Natural killer cell (primary cell): ENCODE measurements at regions of chr13 and their contacts with region 1.

Region 1: DNA sequence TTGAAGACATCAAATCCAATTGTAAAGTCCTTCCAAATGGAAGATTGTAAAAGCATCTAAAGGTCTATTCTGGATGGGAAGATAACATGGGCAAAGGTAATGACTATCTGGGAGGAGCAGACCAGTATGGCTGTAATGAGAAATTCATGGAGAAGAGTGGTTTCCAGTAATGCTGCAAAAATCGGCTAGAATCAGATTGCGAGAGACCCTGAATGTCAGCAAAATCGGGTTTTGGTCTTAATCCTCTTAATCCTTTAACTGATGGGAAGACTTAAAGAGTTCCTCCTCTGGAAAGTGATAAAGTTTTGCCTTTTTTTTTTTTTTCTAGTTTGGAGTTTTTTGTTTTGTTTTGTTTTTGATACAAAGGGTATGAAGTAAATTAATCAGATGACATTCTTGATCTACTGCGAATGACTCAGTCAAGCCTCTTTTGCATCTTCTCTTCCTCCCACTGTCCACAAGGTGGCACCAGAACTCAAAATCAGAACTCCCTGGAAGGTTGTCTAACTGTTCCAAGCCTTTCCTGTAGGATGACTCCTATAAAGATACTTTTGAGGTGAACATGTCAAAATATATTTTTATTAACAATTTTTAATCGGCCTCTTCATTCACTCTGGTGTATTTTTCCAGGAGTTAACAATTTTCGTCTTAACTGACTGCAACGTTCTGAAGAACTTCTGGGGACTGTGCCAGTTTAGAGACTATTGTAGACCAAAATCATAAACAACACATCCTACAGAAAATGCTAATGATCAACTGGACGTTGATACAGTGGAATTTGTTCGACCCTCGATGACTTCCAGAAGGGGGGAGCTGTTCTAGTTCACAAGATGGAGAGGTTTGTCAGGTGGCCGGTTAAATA is 213.3 kb upstream of the MIR17HG start:
- DNase-seq: peak in 1 of 2 donors; percentile 58
- ATAC-seq: peak in 1 of 3 donors; percentile 44
- H3K4me3 ChIP-seq: no peak overlapping the region
- H3K4me3 Mint-ChIP-seq: no peak overlapping the region
- H3K27ac ChIP-seq: no peak overlapping the region
- H3K27ac Mint-ChIP-seq: no peak overlapping the region
- H3K4me1 ChIP-seq: no peaks in the 10 kb centered on the region
- H3K4me1 Mint-ChIP-seq: no peaks in the 10 kb centered on the region
- H3K27me3 ChIP-seq: no peaks in the 10 kb centered on the region
- H3K27me3 Mint-ChIP-seq: no peaks in the 10 kb centered on the region
- CTCF ChIP-seq: peak; percentile 60

Region 2: GRCh38 chr13:90792335-90792734 is 341.8 kb before region 1 on chr13:
- intact Hi-C with region 1: no loop called
- DNase-seq: no peak
- ATAC-seq: no peak
- H3K4me3 ChIP-seq: no peak overlapping the region
- H3K4me3 Mint-ChIP-seq: no peak overlapping the region
- H3K27ac ChIP-seq: no peak overlapping the region
- H3K27ac Mint-ChIP-seq: no peak overlapping the region
- H3K4me1 ChIP-seq: no peaks in the 10 kb centered on the region
- H3K4me1 Mint-ChIP-seq: no peaks in the 10 kb centered on the region
- H3K27me3 ChIP-seq: no peaks in the 10 kb centered on the region
- H3K27me3 Mint-ChIP-seq: no peaks in the 10 kb centered on the region
- CTCF ChIP-seq: no peak

Region 3: GRCh38 chr13:90910018-90910639 is 224.0 kb before region 1 on chr13:
- intact Hi-C with region 1: no loop called
- DNase-seq: no peak
- ATAC-seq: no peak
- H3K4me3 ChIP-seq: no peak overlapping the region
- H3K4me3 Mint-ChIP-seq: no peak overlapping the region
- H3K27ac ChIP-seq: no peak overlapping the region
- H3K27ac Mint-ChIP-seq: no peak overlapping the region
- H3K4me1 ChIP-seq: no peaks in the 10 kb centered on the region
- H3K4me1 Mint-ChIP-seq: no peaks in the 10 kb centered on the region
- H3K27me3 ChIP-seq: no peaks in the 10 kb centered on the region
- H3K27me3 Mint-ChIP-seq: no peaks in the 10 kb centered on the region
- CTCF ChIP-seq: no peak

Region 4: GRCh38 chr13:91406619-91407018 is 272.4 kb after region 1 on chr13:
- intact Hi-C with region 1: loop called (anchors 2 kb)
- DNase-seq: peak in 1 of 2 donors; percentile 67
- ATAC-seq: no peak
- H3K4me3 ChIP-seq: no peak overlapping the region
- H3K4me3 Mint-ChIP-seq: no peak overlapping the region
- H3K27ac ChIP-seq: no peak overlapping the region
- H3K27ac Mint-ChIP-seq: no peak overlapping the region
- H3K4me1 ChIP-seq: no peaks in the 10 kb centered on the region
- H3K4me1 Mint-ChIP-seq: no peaks in the 10 kb centered on the region
- H3K27me3 ChIP-seq: no peaks in the 10 kb centered on the region
- H3K27me3 Mint-ChIP-seq: peaks cover 3 to 29% of the 10 kb centered on the region in 2 donors
- CTCF ChIP-seq: peak; percentile 14